ENCODE measurements at regions of chr10 and their contacts with region 1.

Region 1: GRCh38 chr10:100518761-100519241 is 860 bp downstream of the SEC31B start:
- DNase-seq: peak; percentile 82
- ATAC-seq: peak; percentile 86
- H3K4me3 Mint-ChIP-seq: no peak overlapping the region
- H3K27ac Mint-ChIP-seq: peak overlapping the region; percentile 52
- H3K4me1 Mint-ChIP-seq: peaks cover 18% of the 10 kb centered on the region
- H3K27me3 Mint-ChIP-seq: no peaks in the 10 kb centered on the region
- CTCF ChIP-seq: peak; percentile 97

Region 2: DNA sequence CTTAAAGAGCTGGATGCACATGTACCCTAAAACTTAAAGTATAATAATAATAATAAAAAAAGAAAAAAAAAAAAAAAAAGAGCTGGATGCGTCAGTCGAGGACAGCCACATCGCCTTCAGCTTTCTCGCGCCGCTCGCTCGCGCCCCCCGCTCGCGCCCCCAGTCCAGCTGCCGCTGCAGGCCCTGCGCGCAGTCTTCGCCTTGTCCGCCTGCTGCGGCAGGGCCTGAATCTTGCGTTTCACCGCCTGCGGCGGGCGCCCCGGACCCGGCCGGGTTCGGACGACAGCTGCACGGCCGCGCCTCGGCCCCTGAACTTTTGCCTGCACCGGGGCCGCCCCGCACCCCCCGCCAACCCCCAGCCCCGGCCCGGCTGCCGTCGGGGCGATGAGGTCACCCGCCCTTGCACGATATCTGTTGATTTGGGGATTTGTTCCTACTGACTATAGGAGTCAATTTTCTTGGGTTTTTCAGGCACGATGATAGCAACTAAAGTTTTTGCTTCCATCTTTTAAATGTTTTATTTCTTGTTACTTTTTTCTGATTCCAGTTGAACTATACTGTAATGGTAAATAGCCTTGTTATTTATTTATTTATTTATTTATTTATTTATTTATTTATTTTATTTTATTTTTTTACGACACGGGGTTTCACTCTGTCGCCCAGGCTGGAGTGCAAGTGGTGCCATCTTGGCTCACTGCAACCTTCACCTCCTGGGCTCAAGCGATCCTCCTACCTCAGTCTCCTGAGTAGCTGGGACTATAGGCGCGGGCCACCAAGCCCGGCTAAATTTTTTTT is 403.6 kb before region 1 on chr10:
- CTCF ChIA-PET with region 1: no interaction called
- POLR2A ChIA-PET with region 1: no interaction called
- intact Hi-C with region 1: no loop called
- DNase-seq: no peak
- ATAC-seq: no peak
- H3K4me3 Mint-ChIP-seq: no peak overlapping the region
- H3K27ac Mint-ChIP-seq: no peak overlapping the region
- H3K4me1 Mint-ChIP-seq: no peaks in the 10 kb centered on the region
- H3K27me3 Mint-ChIP-seq: peaks cover 14% of the 10 kb centered on the region
- CTCF ChIP-seq: no peak

Region 3: DNA sequence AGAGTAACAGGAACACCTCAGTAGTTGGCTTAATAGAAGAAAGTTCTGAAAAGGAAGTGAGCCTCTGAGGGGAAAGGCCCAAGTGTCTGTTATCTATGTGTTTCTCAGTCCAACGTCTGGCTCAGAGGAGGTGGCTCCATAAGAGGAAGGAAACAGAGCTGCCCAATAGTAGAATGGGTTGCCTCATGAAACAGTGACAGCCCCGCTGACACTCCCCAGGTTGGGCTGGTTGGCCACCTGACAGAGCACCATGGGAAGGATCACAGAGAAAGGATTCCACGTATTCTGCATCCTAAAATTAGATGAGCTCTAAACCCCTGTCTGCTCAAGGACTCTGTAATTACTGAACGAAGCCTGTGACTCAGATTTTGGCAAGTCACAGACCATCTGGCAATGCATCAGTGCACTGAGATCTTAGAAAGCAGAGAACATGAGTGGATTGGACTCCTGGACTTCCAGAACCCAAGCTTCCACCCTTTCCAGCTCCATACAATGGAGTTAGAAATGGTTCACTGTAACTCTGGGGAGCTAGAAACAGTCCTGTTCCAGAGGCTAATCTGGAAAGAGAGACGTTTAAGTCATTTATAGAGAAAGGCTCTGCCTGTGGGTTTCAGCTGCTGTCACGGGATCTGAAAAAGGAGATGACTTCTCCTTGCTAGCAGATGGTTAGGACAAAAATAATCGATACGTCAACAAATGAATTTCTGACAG is 191.6 kb before region 1 on chr10:
- CTCF ChIA-PET with region 1: interaction called, 10 read pairs
- POLR2A ChIA-PET with region 1: no interaction called
- intact Hi-C with region 1: no loop called
- DNase-seq: peak; percentile 73
- ATAC-seq: peak; percentile 99
- H3K4me3 Mint-ChIP-seq: no peak overlapping the region
- H3K27ac Mint-ChIP-seq: peak overlapping the region; percentile 81
- H3K4me1 Mint-ChIP-seq: peaks cover 17% of the 10 kb centered on the region
- H3K27me3 Mint-ChIP-seq: no peaks in the 10 kb centered on the region
- CTCF ChIP-seq: no peak

Region 4: GRCh38 chr10:100346765-100347567 is 171.8 kb before region 1 on chr10 and contains the start of gene SCD:
- CTCF ChIA-PET with region 1: interaction called, 65 read pairs
- POLR2A ChIA-PET with region 1: interaction called, 4 read pairs
- intact Hi-C with region 1: no loop called
- DNase-seq: peak; percentile 94
- ATAC-seq: peak; percentile 90
- H3K4me3 Mint-ChIP-seq: peak within 1 kb of the TSS; percentile 99
- H3K27ac Mint-ChIP-seq: peak within 1 kb of the TSS; percentile 94
- H3K4me1 Mint-ChIP-seq: peaks cover 50% of the 10 kb centered on the region
- H3K27me3 Mint-ChIP-seq: no peaks in the 10 kb centered on the region
- CTCF ChIP-seq: no peak
- total RNA-seq, gene SCD: 271 TPM

Region 5: GRCh38 chr10:100481462-100482081 is 37.2 kb before region 1 on chr10:
- CTCF ChIA-PET with region 1: interaction called, 134 read pairs
- POLR2A ChIA-PET with region 1: interaction called, 12 read pairs
- intact Hi-C with region 1: loop called (anchors 5 kb)
- DNase-seq: peak; percentile 96
- ATAC-seq: peak; percentile 98
- H3K4me3 Mint-ChIP-seq: peak overlapping the region; percentile 77
- H3K27ac Mint-ChIP-seq: no peak overlapping the region
- H3K4me1 Mint-ChIP-seq: peaks cover 10% of the 10 kb centered on the region
- H3K27me3 Mint-ChIP-seq: peaks cover 18% of the 10 kb centered on the region
- CTCF ChIP-seq: no peak

Region 6: GRCh38 chr10:100508691-100509150 is 10.1 kb before region 1 on chr10:
- CTCF ChIA-PET with region 1: interaction called, 84 read pairs
- POLR2A ChIA-PET with region 1: interaction called, 5 read pairs
- intact Hi-C with region 1: no loop called
- DNase-seq: peak; percentile 65
- ATAC-seq: peak; percentile 48
- H3K4me3 Mint-ChIP-seq: peak overlapping the region; percentile 59
- H3K27ac Mint-ChIP-seq: peak overlapping the region; percentile 95
- H3K4me1 Mint-ChIP-seq: peaks cover 72% of the 10 kb centered on the region
- H3K27me3 Mint-ChIP-seq: no peaks in the 10 kb centered on the region
- CTCF ChIP-seq: peak; percentile 91

Region 7: DNA sequence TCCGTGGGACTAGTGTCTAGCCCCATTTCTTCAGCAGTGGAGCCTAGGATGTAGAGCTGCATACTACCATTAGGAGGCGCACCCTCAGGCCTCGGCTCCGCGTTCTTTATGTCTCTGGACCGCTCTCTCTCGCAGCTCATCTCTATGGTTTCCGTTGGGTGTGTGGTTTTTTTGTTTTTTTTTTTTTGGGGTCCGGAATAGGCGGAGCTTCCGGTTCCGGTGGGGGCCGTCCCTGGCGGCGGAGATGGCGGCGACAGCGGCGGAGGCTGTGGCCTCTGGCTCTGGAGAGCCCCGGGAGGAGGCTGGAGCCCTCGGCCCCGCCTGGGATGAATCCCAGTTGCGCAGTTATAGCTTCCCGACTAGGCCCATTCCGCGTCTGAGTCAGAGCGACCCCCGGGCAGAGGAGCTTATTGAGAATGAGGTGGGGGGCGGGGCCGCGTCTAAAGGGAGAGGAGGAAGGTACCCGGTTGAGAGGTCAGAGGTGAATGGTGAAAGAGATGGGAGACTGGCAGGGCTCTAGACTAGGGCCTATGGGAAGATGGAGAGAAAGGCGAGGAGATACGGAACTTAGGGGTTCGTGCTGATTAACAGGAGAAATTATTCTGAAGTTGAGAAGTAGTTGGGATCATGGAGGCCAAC is 17.0 kb after region 1 on chr10 and contains the start of gene HIF1AN:
- CTCF ChIA-PET with region 1: interaction called, 24 read pairs
- POLR2A ChIA-PET with region 1: interaction called, 3 read pairs
- intact Hi-C with region 1: no loop called
- DNase-seq: peak; percentile 96
- ATAC-seq: peak; percentile 98
- H3K4me3 Mint-ChIP-seq: no peak within 1 kb of the TSS
- H3K27ac Mint-ChIP-seq: no peak within 1 kb of the TSS
- H3K4me1 Mint-ChIP-seq: peaks cover 22% of the 10 kb centered on the region
- H3K27me3 Mint-ChIP-seq: no peaks in the 10 kb centered on the region
- CTCF ChIP-seq: peak; percentile 76
- total RNA-seq, gene HIF1AN: 35.3 to 36.5 TPM

Region 8: DNA sequence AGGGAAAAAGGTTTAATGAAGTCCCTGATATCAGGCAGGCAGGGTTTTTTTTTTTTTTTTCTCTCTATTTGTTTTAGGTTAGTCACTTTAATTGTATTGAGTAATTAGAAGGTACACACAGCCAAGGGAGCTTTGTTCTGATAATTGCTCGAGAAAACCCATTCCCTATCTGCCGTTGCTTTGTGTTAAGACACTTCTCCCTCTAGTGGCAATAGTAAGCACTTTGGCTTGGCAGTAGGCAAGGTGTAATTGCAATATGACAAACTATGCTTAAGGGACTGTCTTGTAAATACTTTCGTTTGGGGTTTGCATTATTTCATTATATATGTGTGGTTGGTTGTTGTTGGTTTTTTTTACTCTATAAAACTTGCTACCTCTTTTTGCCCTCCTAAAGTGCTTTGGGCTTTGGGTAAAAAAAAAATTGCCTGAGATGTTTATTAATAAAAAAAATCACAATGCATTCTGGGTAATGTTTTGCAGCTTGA is 948.5 kb after region 1 on chr10:
- CTCF ChIA-PET with region 1: no interaction called
- POLR2A ChIA-PET with region 1: no interaction called
- intact Hi-C with region 1: no loop called
- DNase-seq: peak; percentile 29
- ATAC-seq: peak; percentile 88
- H3K4me3 Mint-ChIP-seq: no peak overlapping the region
- H3K27ac Mint-ChIP-seq: no peak overlapping the region
- H3K4me1 Mint-ChIP-seq: peaks cover 8% of the 10 kb centered on the region
- H3K27me3 Mint-ChIP-seq: no peaks in the 10 kb centered on the region
- CTCF ChIP-seq: peak; percentile 75

Measured in activated CD8-positive, alpha-beta T cell treated with anti-CD3 and anti-CD28 coated beads for 36 hours (primary cell).